ENCODE measurements at regions of chr4 and their contacts with region 1.

Region 1: GRCh38 chr4:85569730-85570299 is 94.9 kb downstream of the ARHGAP24 start:
- DNase-seq: no peak
- ATAC-seq: no peak

Region 2: DNA sequence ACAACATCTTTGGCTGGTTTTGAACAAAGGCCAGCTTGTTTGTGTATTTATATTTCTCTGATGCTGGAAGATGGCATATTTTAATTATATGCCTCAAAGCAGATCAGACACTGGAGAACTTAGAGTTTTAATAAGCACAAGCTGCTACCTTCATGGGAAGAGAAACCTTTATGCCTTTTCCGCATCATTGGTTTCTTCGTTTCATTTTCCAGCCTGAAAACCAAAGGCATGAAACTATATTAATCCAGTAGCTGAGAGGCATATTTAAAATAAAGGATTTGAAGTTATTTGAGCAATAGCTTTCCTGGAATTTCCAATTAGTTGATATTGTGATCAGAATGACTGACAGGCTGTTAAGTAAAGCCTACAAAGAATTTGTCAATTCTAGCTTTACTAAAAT is 46.1 kb after region 1 on chr4:
- intact Hi-C with region 1: loop called (anchors 1 kb)
- DNase-seq: no peak
- ATAC-seq: no peak

Measured in Right ventricle myocardium inferior (tissue), 1 donor.